CD4-positive, alpha-beta memory T cell (primary cell): ENCODE measurements at regions of chr3 and their contacts with region 1.

Region 1: DNA sequence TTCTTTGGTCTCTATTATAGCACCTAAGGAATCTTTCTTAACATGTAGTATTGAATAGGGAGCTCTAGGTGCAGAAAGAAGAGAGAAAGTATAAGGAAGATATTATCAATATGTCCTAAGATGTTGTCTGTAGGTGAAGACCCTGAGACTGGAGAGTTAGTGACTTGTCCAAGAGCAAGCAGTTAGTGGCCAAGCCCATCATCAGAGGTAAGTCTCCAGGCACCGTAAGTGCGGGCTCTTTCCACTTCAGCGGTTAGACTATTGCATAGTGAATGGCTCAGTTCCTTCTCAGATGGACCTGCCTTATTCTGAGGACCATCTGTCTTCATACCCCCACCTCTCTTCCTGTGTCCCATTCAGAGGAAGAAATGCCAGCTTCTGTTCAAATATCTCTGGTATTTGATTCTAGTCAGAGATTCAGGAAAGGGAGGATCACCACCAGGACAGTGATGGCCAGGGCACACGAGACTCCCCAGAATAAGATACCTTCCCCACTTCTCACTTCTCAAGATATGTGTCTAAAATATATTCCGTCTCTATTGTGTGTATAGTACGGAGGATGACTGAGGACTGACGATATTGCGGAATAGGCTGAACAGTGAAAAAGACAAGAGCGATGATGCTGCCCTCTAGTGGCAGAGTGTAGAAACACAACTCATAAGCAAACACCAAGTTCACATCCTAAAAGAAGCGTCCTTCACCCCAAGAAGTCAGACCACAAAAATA is 19.1 kb upstream of the ADGRG7 start:
- DNase-seq: peak; percentile 50 to 64 (median 58)
- H3K4me3 ChIP-seq: no peak overlapping the region
- H3K4me3 Mint-ChIP-seq: peak overlapping the region in 7 of 8 donors; percentile 0 to 47 (median 18)
- H3K27ac ChIP-seq: no peak overlapping the region
- H3K27ac Mint-ChIP-seq: peak overlapping the region in 2 of 7 donors; percentile 1 to 2
- H3K4me1 ChIP-seq: peaks cover 3% of the 10 kb centered on the region
- H3K4me1 Mint-ChIP-seq: peaks cover 0 to 5% (median 4%) of the 10 kb centered on the region in 4 donors
- H3K27me3 ChIP-seq: no peaks in the 10 kb centered on the region
- H3K27me3 Mint-ChIP-seq: no peaks in the 10 kb centered on the region

Region 2: DNA sequence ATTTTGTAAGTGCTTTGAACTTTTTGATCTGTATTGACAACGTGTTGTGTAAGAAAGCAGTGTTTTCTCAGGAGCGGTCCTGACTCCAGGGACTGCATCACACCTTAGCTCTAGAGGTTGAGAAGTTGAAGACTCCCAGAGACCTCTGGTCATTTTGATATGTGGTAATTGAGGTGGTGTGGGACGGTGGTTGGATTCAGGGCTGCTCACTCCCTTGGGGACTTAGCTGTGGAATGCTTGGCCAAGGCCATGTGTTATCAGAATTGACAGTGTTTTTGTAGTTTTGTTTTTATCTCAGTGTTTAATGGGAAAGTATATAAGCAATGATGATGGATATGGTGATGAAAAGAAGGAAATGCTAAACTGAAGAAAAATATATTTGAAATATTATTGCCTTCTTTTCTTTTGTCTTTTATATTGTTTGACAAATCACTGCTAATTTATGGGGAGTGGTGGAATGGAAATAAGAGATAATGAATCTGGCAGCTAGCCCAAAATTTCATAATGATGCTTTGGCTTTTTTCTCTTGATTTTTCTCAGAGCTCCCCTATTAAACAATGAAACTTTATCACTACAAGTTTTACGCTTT is 756.6 kb before region 1 on chr3:
- CTCF ChIA-PET with region 1: interaction called, 50 read pairs
- POLR2A ChIA-PET with region 1: no interaction called
- intact Hi-C with region 1: loop called (anchors 1 kb)
- DNase-seq: no peak
- H3K4me3 ChIP-seq: no peak overlapping the region
- H3K4me3 Mint-ChIP-seq: no peak overlapping the region
- H3K27ac ChIP-seq: no peak overlapping the region
- H3K27ac Mint-ChIP-seq: no peak overlapping the region
- H3K4me1 ChIP-seq: no peaks in the 10 kb centered on the region
- H3K4me1 Mint-ChIP-seq: peaks cover 0 to 2% (median under 1%) of the 10 kb centered on the region in 4 donors
- H3K27me3 ChIP-seq: no peaks in the 10 kb centered on the region
- H3K27me3 Mint-ChIP-seq: no peaks in the 10 kb centered on the region

Region 3: DNA sequence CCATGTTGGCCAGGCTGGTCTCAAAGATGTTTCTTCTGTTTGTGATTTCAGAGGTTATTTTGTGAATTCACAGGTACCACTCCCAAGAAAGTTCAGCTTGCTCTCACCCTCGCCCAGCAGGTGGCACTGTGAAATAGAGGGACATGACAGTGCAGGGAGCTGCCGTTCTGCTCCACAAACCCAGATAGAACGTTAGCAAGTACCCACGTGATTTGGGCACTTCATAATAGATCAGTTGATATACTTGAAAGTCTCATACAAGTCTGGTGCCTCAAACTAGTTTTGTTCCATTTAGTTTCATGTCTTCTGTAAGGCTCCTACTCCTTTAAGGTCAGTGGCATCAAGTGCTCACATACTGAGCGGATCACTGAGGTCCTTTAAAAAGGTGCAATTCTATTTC is 521.5 kb before region 1 on chr3:
- CTCF ChIA-PET with region 1: interaction called, 19 read pairs
- POLR2A ChIA-PET with region 1: no interaction called
- intact Hi-C with region 1: loop called (anchors 1 kb)
- DNase-seq: peak; percentile 63 to 75 (median 66)
- H3K4me3 ChIP-seq: no peak overlapping the region
- H3K4me3 Mint-ChIP-seq: peak overlapping the region in 1 of 8 donors; percentile 45
- H3K27ac ChIP-seq: no peak overlapping the region
- H3K27ac Mint-ChIP-seq: peak overlapping the region in 2 of 7 donors; percentile 1 to 71
- H3K4me1 ChIP-seq: peaks cover 20% of the 10 kb centered on the region
- H3K4me1 Mint-ChIP-seq: peaks cover 24 to 31% (median 28%) of the 10 kb centered on the region in 4 donors
- H3K27me3 ChIP-seq: no peaks in the 10 kb centered on the region
- H3K27me3 Mint-ChIP-seq: no peaks in the 10 kb centered on the region

Region 4: DNA sequence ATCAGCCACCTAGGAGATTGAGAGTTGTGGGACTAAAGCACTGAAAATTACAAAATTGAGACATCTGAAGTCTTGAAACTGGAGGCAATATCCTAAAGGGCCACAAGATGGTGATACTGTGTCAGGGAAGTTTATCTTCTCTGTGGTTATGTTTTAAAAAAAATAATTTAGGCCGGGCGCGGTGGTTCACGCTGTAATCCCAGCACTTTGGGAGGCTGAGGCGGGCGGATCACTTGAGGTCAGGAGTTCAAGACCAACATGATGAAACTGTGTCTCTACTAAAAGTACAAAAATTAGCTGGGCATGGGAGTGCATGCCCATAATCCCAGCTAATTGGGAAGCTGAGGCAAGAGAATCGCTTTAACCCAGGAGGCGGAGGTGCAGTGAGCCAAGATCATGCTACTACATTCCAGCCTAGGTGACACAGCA is 273.6 kb before region 1 on chr3:
- CTCF ChIA-PET with region 1: interaction called, 57 read pairs
- POLR2A ChIA-PET with region 1: no interaction called
- intact Hi-C with region 1: loop called (anchors 1 kb)
- DNase-seq: peak; percentile 42 to 48 (median 44)
- H3K4me3 ChIP-seq: no peak overlapping the region
- H3K4me3 Mint-ChIP-seq: peak overlapping the region in 4 of 8 donors; percentile 23 to 50 (median 40)
- H3K27ac ChIP-seq: no peak overlapping the region
- H3K27ac Mint-ChIP-seq: peak overlapping the region in 6 of 7 donors; percentile 2 to 70 (median 60)
- H3K4me1 ChIP-seq: peaks cover 11% of the 10 kb centered on the region
- H3K4me1 Mint-ChIP-seq: peaks cover 5 to 17% (median 9%) of the 10 kb centered on the region in 4 donors
- H3K27me3 ChIP-seq: no peaks in the 10 kb centered on the region
- H3K27me3 Mint-ChIP-seq: no peaks in the 10 kb centered on the region

Region 5: DNA sequence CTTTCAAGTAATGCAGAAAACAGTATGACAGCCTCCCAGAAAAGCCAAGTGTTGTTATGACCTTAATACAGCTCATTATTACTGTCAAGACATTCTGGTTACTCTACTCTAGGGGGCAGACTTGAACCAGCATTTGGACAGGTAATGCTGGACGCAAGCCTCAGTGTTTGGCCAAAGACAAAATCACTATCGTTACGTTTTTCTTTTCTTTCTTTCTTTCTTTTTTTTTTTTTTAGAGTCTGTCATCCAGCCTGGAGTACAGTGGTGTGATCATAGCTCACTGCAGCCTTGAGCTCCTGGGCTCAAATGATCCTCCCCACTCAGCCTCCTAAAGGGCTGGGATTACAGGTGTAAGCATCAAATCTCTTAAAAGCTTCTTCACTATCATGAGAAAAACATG is 127.3 kb before region 1 on chr3:
- CTCF ChIA-PET with region 1: interaction called, 48 read pairs
- POLR2A ChIA-PET with region 1: no interaction called
- intact Hi-C with region 1: loop called (anchors 1 kb)
- DNase-seq: peak in 2 of 5 donors; percentile 1 to 12
- H3K4me3 ChIP-seq: no peak overlapping the region
- H3K4me3 Mint-ChIP-seq: no peak overlapping the region
- H3K27ac ChIP-seq: no peak overlapping the region
- H3K27ac Mint-ChIP-seq: no peak overlapping the region
- H3K4me1 ChIP-seq: no peaks in the 10 kb centered on the region
- H3K4me1 Mint-ChIP-seq: peaks cover 3 to 10% (median 6%) of the 10 kb centered on the region in 4 donors
- H3K27me3 ChIP-seq: no peaks in the 10 kb centered on the region
- H3K27me3 Mint-ChIP-seq: peaks cover 0 to 4% of the 10 kb centered on the region in 2 donors

Region 6: GRCh38 chr3:100577382-100578002 is 12.8 kb before region 1 on chr3:
- CTCF ChIA-PET with region 1: interaction called, 54 read pairs
- POLR2A ChIA-PET with region 1: no interaction called
- intact Hi-C with region 1: no loop called
- DNase-seq: no peak
- H3K4me3 ChIP-seq: no peak overlapping the region
- H3K4me3 Mint-ChIP-seq: no peak overlapping the region
- H3K27ac ChIP-seq: no peak overlapping the region
- H3K27ac Mint-ChIP-seq: no peak overlapping the region
- H3K4me1 ChIP-seq: no peaks in the 10 kb centered on the region
- H3K4me1 Mint-ChIP-seq: no peaks in the 10 kb centered on the region
- H3K27me3 ChIP-seq: no peaks in the 10 kb centered on the region
- H3K27me3 Mint-ChIP-seq: peaks cover 1 to 3% of the 10 kb centered on the region in 2 donors

Region 7: GRCh38 chr3:100603469-100603868 is 13.2 kb after region 1 on chr3:
- CTCF ChIA-PET with region 1: interaction called, 12 read pairs
- POLR2A ChIA-PET with region 1: no interaction called
- intact Hi-C with region 1: no loop called
- DNase-seq: no peak
- H3K4me3 ChIP-seq: no peak overlapping the region
- H3K4me3 Mint-ChIP-seq: peak overlapping the region in 5 of 8 donors; percentile 39 to 77 (median 57)
- H3K27ac ChIP-seq: no peak overlapping the region
- H3K27ac Mint-ChIP-seq: peak overlapping the region in 1 of 7 donors; percentile 6
- H3K4me1 ChIP-seq: peaks cover 20% of the 10 kb centered on the region
- H3K4me1 Mint-ChIP-seq: peaks cover 13 to 26% (median 17%) of the 10 kb centered on the region in 4 donors
- H3K27me3 ChIP-seq: no peaks in the 10 kb centered on the region
- H3K27me3 Mint-ChIP-seq: peaks cover 6 to 9% of the 10 kb centered on the region in 2 donors